Posterior vena cava (tissue), 2 donors: ENCODE measurements at regions of chr11 and their contacts with region 1.

Region 1: GRCh38 chr11:355581-356458 is 13.5 kb upstream of the B4GALNT4 start:
- DNase-seq: peak; percentile 98

Region 2: DNA sequence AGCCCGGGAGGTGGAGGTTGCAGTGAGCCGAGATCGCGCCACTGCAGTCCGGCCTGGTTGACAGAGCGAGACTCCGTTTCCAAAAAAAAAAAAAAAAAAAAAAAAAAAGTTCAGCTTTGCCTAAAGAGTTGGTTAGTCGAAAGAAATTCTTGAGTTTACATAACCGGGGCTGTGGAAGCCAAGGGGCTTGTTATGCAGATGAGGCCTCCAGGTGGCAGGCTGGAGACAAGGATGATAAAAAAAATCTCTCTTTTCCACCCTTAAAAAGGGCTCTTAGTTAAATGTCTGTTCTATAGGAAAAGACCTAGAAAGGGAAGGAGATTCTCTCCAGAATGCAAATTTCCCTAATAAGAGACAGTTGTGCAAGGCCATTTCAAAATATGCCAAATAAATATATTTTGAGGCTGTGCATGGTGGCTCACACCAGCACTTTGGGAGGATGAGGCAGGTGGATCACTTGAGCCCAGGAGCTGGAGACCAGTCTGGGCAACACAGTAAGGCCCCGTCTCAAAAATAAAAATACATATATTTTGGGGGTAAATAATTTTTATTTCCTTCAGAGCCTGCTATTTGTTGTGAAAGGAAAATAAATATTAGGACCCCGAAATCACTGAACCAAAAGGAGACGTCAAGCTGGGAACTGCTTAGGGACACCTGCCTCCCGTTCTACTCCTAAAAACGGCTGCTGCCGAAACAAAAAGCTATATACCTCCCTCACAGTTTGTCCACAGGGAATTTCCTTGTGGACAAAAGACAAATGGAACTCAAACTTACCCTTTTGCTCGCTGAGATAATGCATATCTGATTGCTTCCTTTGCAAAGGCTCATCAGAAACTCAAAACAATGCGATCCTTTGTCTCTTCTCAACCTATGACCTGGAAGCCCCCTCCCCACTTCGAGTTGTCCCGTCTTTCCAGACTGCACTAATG is 50.6 kb before region 1 on chr11:
- intact Hi-C with region 1: loop called (anchors 5 kb)
- DNase-seq: peak; percentile 86

Region 3: DNA sequence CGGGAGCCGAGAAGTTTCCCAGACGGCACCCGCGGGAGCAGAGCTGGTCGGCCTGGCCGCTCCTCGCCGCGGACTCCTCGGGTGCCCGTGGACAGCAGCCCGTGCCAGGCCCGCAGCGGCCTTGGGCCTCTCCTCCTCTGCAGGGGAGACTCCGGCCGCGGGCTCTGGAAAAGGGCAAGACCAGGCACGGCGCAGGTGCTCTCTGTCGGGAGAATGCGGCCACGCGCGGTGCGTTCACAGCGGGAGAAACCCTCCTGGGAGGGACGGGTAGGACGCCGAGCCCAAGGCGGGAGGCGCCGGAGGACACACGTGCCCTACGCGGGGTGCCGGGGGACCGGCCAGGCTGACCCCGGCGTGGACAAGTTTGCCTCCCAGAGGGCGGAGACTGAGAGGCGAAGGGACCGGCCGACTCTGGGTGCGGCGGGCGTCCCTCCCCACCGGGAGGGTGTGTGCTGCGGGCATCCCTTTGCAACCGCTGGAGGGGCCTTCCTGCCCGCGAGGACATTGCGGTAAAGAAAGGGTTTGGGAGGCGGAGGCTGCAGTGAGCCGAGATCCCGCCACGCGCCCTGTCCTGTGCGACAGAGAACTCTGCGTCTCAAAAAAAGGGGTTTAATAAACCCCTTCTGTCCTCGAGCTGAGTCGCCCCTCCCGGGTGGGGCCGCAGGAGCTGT is 39.7 kb before region 1 on chr11:
- intact Hi-C with region 1: loop called in 1 of 2 experiments (anchors 5 kb)
- DNase-seq: peak; percentile 84

Region 4: DNA sequence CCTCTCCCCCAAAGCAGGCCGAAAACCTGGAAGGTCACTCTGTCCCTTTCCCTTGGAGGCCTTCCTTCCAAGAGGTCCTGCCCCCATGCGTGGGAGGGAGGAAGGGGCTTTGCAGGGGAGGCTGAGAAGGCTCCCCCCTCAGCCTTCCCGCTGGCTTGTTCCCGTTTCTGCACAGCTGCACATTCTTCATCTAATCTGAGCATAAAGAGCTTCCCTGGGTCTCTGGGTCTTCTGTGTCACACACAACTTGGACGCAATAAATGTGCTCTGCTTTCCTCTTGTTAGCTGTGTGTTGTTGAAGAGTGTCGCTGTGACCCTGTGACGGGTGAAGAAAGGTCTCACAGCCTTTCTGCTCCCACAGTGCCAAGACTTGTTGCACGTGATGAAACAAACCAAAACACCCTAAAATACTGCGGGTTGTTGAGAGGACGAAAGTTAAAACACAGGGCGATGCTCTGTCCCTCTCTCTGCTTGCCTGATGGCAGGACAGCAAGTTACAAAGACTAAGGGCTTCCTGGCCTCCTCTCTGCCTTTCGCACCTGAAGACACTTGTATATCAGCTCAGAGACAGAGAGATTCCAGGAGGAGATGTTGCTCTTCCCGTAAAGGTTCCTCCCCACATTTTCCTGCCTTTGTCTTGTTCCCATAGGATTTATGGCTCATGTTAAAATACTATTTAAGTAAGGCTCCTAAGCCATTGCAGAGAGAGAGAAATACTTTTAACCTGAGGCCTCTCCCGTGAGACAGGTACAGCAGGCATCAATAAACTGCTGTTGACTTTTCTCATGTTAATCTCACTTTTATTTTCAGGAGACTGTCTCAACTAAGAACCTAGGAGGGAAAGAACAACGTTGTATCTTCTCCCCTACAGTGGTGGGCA is 19.8 kb before region 1 on chr11:
- intact Hi-C with region 1: no loop called
- DNase-seq: peak; percentile 69

Region 5: GRCh38 chr11:373716-374551 is 18.1 kb after region 1 on chr11:
- intact Hi-C with region 1: no loop called
- DNase-seq: no peak

Region 6: GRCh38 chr11:396948-397548 is 41.2 kb after region 1 on chr11:
- intact Hi-C with region 1: no loop called
- DNase-seq: peak; percentile 93